Heart right ventricle (tissue), 16 donors: ENCODE measurements at regions of chr20 and their contacts with region 1.

Region 1: DNA sequence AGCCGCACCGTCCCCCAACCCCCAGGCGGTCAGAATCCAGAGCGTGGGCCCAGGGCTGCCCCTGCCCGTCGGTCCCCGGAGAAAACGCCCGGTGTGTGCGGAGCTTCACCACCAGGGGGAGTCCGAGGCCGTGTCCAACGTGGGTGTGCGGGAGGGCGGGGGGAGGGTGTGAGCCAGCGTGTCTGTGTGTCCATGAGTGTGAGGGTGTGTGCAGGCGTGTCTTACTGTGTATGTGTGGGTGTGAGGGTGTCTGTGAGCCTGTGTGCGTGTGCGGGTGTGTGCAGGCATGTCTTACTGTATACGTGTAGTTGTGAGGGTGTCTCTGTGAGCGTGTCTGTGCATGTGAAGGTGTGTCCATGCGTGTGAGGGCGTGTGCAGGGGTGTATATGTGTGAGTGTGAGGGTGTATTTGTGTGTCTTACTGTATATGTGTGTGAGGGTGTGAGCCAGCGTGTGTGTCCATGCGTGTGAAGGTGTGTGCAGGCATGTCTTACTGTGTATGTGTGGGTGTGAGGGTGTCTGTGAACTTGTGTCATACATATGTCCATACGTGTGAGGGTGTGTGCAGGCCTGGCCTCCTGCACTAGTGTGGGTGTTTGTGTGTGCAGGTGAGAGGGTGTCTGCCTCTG is 24.6 kb upstream of the GATA5 start:
- DNase-seq: peak; percentile 78 to 85
- ATAC-seq: peak; percentile 59 to 86 (median 75)
- H3K4me3 ChIP-seq: no peak overlapping the region
- H3K27ac ChIP-seq: no peak overlapping the region
- H3K4me1 ChIP-seq: peaks cover 0 to 25% (median 14%) of the 10 kb centered on the region in 9 donors
- H3K27me3 ChIP-seq: peaks cover 0 to 7% (median 0%) of the 10 kb centered on the region in 7 donors
- CTCF ChIP-seq: peak; percentile 73 to 85 (median 82)

Region 2: DNA sequence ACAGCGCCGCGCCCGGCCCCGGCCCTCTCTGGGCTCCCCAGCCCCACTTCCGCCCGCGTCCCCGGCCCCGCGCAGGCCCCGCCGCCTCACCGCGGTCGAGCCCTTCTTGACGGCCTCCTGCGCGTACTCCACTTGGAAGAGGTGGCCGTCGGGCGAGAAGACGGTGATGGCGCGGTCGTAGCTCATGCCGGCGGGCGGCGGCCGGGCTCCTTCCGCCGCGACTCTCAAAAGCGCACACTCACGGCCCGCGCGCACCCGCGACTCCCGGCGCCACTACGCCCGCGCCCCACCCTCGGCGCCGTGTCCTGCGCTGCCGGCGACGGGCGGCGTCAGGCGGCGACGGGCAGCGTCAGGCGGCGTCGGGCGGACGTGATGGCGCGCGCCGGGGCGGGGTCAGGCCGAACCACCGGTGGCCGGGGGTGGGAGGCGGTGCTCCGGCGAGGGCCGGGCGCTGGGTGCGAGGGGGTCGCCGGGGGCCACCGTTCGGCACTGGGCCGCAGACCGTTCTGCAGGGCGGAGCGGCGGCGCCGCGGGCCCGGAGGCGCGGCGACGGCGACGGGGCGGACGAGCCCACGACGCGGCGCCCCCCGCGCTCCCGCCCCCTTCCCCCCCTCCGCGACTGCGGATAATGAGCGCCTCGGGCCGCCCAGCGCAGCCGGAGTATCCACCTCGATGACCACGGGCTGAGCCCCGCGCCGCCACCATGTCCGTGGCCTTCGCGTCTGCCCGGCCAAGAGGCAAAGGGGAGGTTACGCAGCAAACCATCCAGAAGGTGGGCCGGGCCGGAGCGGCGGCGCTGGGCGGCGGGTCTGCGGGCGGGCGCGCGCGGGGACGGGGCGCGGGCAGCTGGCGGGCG is 357.0 kb before region 1 on chr20 and contains the starts of genes PSMA7 and SS18L1:
- intact Hi-C with region 1: no loop called
- DNase-seq: peak; percentile 88 to 90
- ATAC-seq: peak; percentile 88 to 95 (median 92)
- H3K4me3 ChIP-seq: peak within 1 kb of the TSS; percentile 67 to 96 (median 86)
- H3K27ac ChIP-seq: peak within 1 kb of the TSS; percentile 86 to 100 (median 96)
- H3K4me1 ChIP-seq: peaks cover 8 to 46% (median 38%) of the 10 kb centered on the region in 9 donors
- H3K27me3 ChIP-seq: no peaks in the 10 kb centered on the region
- CTCF ChIP-seq: no peak
- total RNA-seq, gene PSMA7: 172 to 296 (median 200) TPM
- total RNA-seq, gene SS18L1: 6.6 to 11.7 (median 7.4) TPM

Region 3: DNA sequence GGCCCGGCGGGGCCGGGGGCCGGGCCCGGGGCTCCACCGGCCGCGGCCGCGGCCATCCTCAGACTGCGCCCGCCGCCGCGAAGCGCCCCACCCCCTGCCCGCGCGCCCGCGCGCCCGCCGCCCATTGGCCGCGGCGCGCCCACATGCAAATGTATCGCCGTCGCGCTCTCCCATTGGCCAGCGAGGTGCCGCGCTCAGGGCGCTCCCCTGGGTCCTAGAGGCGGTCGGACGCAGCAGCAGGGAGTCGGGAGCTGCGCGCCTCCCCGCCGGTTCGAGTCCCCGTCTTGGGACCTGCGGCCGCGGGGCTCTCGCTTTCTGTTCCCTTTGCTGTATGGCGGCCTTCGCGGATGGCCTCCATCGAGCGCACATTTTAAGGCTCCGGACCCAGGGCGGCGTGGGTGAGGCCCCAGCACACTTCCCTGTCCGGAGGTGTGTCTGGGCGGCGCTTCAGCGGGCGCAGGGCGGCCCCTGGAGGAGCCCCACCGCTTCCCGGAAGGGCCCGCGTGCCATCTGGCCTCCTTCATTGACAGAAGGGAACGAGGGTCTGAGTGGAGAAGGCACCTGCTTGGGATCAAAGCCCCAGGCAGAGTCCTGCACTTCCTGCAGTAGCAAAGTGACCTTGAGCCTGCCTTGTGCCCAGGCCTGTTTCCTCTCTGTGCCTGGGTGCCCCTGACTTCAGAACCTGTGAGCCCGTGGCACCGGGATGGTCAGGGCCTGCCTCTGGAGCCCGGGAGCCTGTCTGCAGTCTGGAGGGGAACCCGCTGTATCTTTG is 92.9 kb before region 1 on chr20 and contains the start of gene CABLES2:
- intact Hi-C with region 1: loop called in 4 of 10 experiments (anchors 2 to 10 kb)
- DNase-seq: peak; percentile 95
- ATAC-seq: peak; percentile 79 to 96 (median 92)
- H3K4me3 ChIP-seq: peak within 1 kb of the TSS; percentile 42 to 81 (median 62)
- H3K27ac ChIP-seq: peak within 1 kb of the TSS in 9 of 10 donors; percentile 2 to 82 (median 62)
- H3K4me1 ChIP-seq: peaks cover 14 to 38% (median 31%) of the 10 kb centered on the region in 9 donors
- H3K27me3 ChIP-seq: no peaks in the 10 kb centered on the region
- CTCF ChIP-seq: peak in 5 of 9 donors; percentile 3 to 31 (median 15)
- total RNA-seq, gene CABLES2: 5.6 to 11.9 (median 8.0) TPM

Region 4: DNA sequence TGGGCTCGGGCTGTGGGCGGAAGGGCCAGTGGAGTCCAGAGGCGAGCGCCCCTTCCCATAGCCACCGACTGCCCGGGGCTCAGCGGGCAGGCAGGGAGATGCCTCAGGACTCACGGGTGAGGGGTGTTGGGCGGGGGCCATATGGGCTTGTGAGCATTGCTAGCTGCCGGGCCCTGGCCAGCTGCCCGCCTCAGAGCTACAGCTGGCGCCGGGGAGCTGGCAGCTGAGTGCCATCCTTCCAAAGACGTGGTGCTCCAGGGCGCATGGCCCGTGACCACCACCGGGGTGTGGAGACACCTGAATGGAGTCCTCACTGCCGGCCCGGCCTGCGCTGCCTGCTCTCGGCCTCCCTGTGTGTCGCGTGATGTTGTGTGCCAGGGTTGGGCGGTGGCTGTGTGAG is 62.4 kb before region 1 on chr20:
- intact Hi-C with region 1: no loop called
- DNase-seq: no peak
- ATAC-seq: peak in 5 of 8 donors; percentile 9 to 30 (median 21)
- H3K4me3 ChIP-seq: no peak overlapping the region
- H3K27ac ChIP-seq: no peak overlapping the region
- H3K4me1 ChIP-seq: peaks cover 0 to 23% (median 5%) of the 10 kb centered on the region in 9 donors
- H3K27me3 ChIP-seq: peaks cover 0 to 24% (median 6%) of the 10 kb centered on the region in 7 donors
- CTCF ChIP-seq: no peak

Region 5: DNA sequence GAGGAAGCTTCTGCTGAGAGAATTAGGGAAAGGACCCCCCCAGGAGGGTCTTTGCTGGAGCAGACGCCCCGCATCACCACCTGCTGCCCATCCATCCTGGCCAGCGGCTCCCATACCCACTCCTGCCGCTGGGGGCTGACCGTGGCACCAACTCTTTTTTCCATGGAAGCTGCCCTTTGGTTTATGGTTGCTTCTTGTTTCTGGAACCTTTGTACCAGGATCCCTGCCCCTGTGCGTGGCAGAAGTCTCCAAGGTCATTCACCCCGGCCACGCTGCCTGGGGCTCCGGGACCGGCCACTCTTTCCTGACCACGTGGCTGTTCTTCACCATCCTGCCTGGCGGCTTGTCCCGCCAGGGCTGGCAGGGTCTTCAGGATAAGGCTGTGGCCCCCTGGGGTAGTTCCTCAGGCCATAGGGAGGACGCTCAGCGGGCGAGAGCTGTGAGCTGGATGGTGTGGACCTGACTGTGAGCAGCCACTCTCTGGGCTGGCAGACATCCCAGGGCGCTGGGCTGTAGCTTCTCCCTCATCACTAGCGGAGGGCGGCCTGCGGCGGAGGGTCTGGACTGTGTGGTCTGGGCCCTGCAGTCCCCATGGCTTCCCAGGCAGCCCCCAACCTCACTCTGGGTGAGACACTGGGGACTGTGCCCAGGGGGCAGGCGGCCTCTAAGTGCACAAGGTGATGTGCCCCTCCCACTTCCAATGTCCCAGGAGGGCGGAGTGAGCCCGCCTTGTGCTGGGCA is 50.2 kb before region 1 on chr20:
- intact Hi-C with region 1: no loop called
- DNase-seq: peak; percentile 17 to 44
- ATAC-seq: peak; percentile 57 to 73 (median 61)
- H3K4me3 ChIP-seq: no peak overlapping the region
- H3K27ac ChIP-seq: no peak overlapping the region
- H3K4me1 ChIP-seq: peaks cover 0 to 3% (median 0%) of the 10 kb centered on the region in 9 donors
- H3K27me3 ChIP-seq: peaks cover 0 to 60% (median 27%) of the 10 kb centered on the region in 7 donors
- CTCF ChIP-seq: no peak

Region 6: DNA sequence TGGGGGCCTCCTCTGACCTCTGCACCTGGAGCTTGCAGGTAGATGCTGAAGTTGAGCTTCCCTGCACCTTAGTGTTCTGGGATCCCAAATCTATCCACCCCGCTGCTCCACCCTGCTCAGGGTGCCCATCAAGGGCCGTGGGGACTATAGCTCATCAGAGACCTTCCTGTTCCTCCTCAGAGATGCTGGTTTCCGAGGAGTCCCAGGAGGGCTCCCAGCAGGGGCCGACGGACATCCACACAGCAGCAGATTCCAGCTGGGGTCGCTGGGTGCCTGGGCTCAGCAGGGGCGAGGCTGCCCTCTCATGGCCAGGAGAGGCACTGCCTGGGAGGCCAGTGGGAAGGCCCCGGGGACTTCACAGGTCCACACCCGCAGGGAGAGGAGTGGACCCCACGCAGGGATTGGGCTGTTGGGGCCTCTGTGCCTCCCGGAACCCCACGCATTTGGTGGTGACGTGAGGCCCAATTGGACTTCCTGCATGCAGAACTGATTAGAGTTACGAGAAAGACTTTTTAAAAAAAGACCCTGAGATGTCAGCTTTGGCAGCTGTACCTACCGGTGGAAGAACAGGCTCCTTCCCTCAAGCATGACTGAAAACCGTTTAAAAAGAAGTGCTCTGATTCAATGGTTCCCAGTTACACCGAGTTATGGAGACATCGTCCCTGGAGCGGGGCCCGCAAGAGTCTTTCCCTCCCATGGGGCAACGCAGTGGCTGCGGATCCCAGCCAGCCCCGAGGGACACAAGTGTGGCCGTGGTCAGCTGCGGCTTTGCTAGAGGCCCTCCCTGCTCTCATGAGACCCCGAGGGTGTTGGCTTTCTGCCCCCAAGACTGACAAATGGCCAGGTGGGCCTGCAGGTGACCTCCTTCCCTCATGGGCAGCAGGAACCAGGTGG is 116.6 kb after region 1 on chr20:
- intact Hi-C with region 1: loop called (anchors 2 to 5 kb)
- DNase-seq: peak; percentile 66 to 81
- ATAC-seq: peak; percentile 73 to 94 (median 84)
- H3K4me3 ChIP-seq: no peak overlapping the region
- H3K27ac ChIP-seq: peak overlapping the region; percentile 57 to 94 (median 84)
- H3K4me1 ChIP-seq: peaks cover 19 to 34% (median 28%) of the 10 kb centered on the region in 9 donors
- H3K27me3 ChIP-seq: peaks cover 0 to 16% (median 0%) of the 10 kb centered on the region in 7 donors
- CTCF ChIP-seq: peak; percentile 93 to 98 (median 96)

Region 7: DNA sequence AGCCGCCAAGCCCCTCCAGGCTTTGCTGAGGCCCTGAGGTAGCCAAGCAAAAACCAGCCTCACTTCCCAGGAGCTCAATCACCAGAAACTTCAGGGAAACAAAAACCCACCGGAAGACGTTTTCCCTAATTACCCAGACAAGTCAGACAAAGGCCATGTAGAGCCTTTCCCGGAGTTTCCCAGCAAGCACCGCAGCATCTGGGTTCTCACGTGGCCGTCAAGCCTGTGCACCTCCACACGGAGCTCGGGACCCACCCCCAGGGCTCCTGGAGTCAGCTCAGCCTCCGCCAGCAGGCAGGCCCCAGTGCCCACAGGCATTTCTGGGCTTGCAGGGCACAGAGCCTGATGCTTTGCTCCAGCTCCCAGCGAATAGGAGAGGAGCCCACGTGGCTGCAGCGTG is 285.8 kb after region 1 on chr20:
- intact Hi-C with region 1: loop called in 9 of 10 experiments (anchors 1 to 10 kb)
- DNase-seq: no peak
- ATAC-seq: no peak
- H3K4me3 ChIP-seq: no peak overlapping the region
- H3K27ac ChIP-seq: no peak overlapping the region
- H3K4me1 ChIP-seq: peaks cover 3 to 28% (median 18%) of the 10 kb centered on the region in 9 donors
- H3K27me3 ChIP-seq: no peaks in the 10 kb centered on the region
- CTCF ChIP-seq: no peak

Region 8: GRCh38 chr20:62808211-62808865 is 308.0 kb after region 1 on chr20:
- intact Hi-C with region 1: loop called in 3 of 10 experiments (anchors 5 to 10 kb)
- DNase-seq: peak; percentile 66 to 75
- ATAC-seq: peak in 7 of 8 donors; percentile 36 to 68 (median 48)
- H3K4me3 ChIP-seq: no peak overlapping the region
- H3K27ac ChIP-seq: no peak overlapping the region
- H3K4me1 ChIP-seq: peaks cover 11 to 47% (median 39%) of the 10 kb centered on the region in 9 donors
- H3K27me3 ChIP-seq: no peaks in the 10 kb centered on the region
- CTCF ChIP-seq: peak; percentile 92 to 97 (median 95)